Naive thymus-derived CD4-positive, alpha-beta T cell (primary cell): ENCODE measurements at regions of chr4 and their contacts with region 1.

Region 1: DNA sequence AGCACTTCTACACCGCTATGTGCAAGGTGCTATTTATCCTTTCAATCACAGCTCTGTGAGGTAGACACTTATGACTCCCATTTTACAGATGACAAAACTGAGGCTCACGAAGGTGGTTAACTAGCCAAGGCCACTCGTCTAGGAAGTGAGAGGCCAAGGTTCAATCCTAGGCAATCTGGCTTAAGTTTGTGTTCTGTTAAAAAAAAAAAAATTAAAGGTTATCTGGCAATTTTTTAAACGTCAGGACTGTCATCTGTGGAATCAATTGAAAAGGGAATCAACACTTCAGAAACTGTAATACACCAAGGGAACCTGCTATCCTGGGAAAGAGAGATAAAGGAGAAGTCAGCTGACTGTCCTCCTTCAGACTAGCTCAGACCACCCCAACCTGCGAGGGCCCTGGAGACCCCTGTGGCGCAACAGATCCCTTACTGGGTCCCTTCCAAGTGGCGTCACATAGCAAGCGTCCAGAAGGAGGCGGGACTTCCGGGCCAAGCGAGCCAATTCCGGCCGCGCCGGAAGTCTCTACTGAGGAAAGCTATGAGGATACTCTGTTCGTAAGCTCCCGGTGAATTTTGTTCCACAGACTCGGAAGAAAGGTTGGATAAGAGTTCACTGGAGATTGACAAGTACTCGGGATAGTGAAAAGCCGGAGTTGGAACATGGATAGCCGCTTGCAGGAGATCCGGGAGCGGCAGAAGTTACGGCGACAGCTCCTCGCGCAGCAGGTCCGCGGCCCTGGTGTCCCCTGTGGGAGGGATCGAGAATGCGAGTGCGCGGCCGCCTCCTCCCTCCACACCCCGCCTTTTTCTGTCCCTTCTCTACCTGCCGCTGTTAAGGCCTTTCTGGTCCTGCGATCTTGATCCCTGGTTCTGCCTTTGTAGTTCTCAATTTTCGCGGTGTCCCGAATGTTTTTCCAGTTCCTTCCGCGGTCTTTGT is at the start of gene METTL14:
- DNase-seq: peak; percentile 71 to 86 (median 82)
- ATAC-seq: peak; percentile 96
- H3K4me3 ChIP-seq: peak within 1 kb of the TSS; percentile 84
- H3K4me3 Mint-ChIP-seq: peak within 1 kb of the TSS; percentile 91 to 99 (median 97)
- H3K27ac ChIP-seq: peak within 1 kb of the TSS; percentile 83
- H3K27ac Mint-ChIP-seq: peak within 1 kb of the TSS; percentile 84 to 99 (median 96)
- H3K4me1 ChIP-seq: peaks cover 13 to 14% of the 10 kb centered on the region in 2 donors
- H3K4me1 Mint-ChIP-seq: peaks cover 12 to 41% (median 33%) of the 10 kb centered on the region in 7 donors
- H3K27me3 ChIP-seq: no peaks in the 10 kb centered on the region
- H3K27me3 Mint-ChIP-seq: no peaks in the 10 kb centered on the region
- total RNA-seq, gene METTL14: 46.9 to 64.8 (median 48.7) TPM

Region 2: DNA sequence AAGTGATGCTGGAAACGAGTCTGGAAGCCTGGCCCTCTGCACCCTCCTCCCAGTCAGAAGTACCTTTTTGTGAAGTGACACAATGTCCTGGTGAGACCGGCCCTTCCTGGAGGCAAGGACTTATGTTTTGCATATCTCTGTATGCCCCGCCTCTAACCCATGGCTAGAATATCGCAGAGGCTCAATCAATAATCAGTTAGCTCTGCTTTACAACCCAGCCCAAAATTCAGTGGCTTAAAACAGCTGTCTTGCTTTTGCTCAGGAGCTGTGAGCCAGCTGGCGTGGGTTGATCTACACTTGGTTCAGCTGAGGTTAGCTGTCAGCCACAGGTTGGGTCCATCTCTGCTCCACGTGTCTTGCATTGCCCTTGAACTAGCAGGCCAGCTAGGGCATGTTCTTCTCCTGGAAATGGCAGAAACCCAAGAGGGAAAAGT is 98.8 kb before region 1 on chr4:
- CTCF ChIA-PET with region 1: no interaction called
- POLR2A ChIA-PET with region 1: no interaction called
- intact Hi-C with region 1: loop called (anchors 1 kb)
- DNase-seq: no peak
- ATAC-seq: no peak
- H3K4me3 ChIP-seq: no peak overlapping the region
- H3K4me3 Mint-ChIP-seq: no peak overlapping the region
- H3K27ac ChIP-seq: no peak overlapping the region
- H3K27ac Mint-ChIP-seq: no peak overlapping the region
- H3K4me1 ChIP-seq: peaks cover 4 to 6% of the 10 kb centered on the region in 2 donors
- H3K4me1 Mint-ChIP-seq: peaks cover 6 to 19% (median 17%) of the 10 kb centered on the region in 7 donors
- H3K27me3 ChIP-seq: no peaks in the 10 kb centered on the region
- H3K27me3 Mint-ChIP-seq: peaks cover 2 to 37% (median 16%) of the 10 kb centered on the region in 5 donors

Region 3: GRCh38 chr4:118729287-118730286 is 44.4 kb after region 1 on chr4:
- CTCF ChIA-PET with region 1: no interaction called
- POLR2A ChIA-PET with region 1: interaction called, 5 read pairs
- intact Hi-C with region 1: loop called in 1 of 2 experiments (anchors 5 kb)
- DNase-seq: peak in 5 of 9 donors; percentile 8 to 52 (median 44)
- ATAC-seq: peak; percentile 74
- H3K4me3 ChIP-seq: no peak overlapping the region
- H3K4me3 Mint-ChIP-seq: peak overlapping the region in 7 of 10 donors; percentile 14 to 69 (median 54)
- H3K27ac ChIP-seq: no peak overlapping the region
- H3K27ac Mint-ChIP-seq: peak overlapping the region; percentile 11 to 89 (median 66)
- H3K4me1 ChIP-seq: peaks cover 0 to 13% of the 10 kb centered on the region in 2 donors
- H3K4me1 Mint-ChIP-seq: peaks cover 0 to 26% (median 17%) of the 10 kb centered on the region in 7 donors
- H3K27me3 ChIP-seq: no peaks in the 10 kb centered on the region
- H3K27me3 Mint-ChIP-seq: no peaks in the 10 kb centered on the region

Region 4: DNA sequence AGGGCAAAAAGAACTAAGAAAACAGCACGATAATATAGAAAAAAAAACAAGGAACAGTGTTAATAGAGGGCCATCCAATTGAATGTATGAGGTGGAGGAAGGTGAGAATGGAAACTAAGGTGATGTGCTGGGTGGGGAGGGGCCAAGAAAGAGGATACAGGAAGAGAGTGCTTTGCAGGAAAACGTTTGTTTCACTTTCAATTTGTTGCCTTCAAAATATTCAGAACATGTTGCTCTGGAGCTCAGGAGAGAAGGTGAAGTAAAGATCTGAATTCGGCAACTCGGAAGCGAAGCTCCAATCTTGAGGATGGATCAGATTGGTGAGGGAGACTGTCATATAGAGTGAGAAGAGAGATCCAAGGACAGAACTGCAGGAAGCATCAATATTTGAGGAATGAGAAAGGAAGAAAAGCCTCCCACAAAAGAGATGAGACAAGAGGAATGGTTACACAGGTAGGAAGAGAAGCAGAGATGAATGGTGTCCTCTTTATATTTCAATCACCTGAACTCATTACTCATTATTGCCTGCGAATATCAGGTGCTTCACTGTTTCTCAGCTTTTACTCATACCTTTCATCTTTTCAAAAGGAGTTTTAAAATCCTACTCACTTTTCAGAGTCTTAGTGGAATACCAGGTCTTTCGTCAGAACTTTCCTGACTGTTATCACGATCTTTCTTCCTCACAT is 165.5 kb after region 1 on chr4:
- CTCF ChIA-PET with region 1: no interaction called
- POLR2A ChIA-PET with region 1: no interaction called
- intact Hi-C with region 1: loop called in 1 of 2 experiments (anchors 5 kb)
- DNase-seq: peak in 7 of 9 donors; percentile 49 to 65 (median 59)
- ATAC-seq: peak; percentile 93
- H3K4me3 ChIP-seq: peak overlapping the region; percentile 78
- H3K4me3 Mint-ChIP-seq: peak overlapping the region; percentile 86 to 99 (median 93)
- H3K27ac ChIP-seq: peak overlapping the region; percentile 73
- H3K27ac Mint-ChIP-seq: peak overlapping the region; percentile 92 to 99 (median 96)
- H3K4me1 ChIP-seq: peaks cover 0 to 9% of the 10 kb centered on the region in 2 donors
- H3K4me1 Mint-ChIP-seq: peaks cover 14 to 37% (median 28%) of the 10 kb centered on the region in 7 donors
- H3K27me3 ChIP-seq: no peaks in the 10 kb centered on the region
- H3K27me3 Mint-ChIP-seq: peaks cover 0 to 20% (median 3%) of the 10 kb centered on the region in 5 donors

Region 5: DNA sequence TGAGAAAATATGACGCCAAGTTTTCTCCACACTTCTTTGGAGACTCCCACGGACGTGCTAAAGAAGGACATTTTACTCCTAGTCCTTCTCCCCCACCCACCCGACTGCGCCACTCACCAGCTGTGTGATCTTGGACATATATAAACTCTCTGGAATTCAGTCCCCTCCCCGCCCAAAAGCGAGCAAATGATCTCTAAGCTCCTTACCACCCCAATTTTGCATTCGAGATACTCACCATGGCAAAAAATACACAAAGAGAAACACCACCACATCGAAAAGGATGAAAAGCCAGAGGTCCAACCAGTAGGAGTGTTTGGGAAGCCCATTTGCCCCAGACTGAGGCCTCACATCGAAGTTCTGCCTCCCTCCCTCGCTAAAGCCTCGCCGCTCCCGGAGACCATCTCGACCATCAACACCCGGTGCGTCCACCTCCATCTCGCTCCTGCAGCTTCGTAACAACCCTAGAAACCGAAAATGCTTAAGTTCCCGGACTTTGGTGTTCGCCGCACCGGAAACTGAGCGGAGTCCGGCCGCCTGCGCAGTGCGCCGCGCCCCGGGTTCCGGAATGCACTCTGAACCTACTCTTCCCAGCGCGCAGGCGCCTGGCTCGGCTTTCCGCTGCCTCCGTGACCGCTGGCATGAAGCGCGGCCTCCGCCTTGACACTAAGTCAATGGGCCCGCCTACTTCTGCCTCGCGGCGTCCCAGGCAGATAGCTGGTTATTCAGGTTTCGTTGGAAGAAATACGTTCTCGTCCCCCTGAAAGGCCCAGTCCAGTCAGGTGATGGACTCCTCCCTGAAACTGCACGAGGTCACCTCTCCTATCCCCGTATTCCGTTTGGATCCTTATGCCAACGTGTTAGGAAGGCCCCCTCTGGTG is 615.2 kb after region 1 on chr4:
- CTCF ChIA-PET with region 1: no interaction called
- POLR2A ChIA-PET with region 1: no interaction called
- intact Hi-C with region 1: loop called (anchors 1 kb)
- DNase-seq: peak; percentile 84 to 94 (median 88)
- ATAC-seq: peak; percentile 97
- H3K4me3 ChIP-seq: peak overlapping the region; percentile 93
- H3K4me3 Mint-ChIP-seq: peak overlapping the region; percentile 92 to 100 (median 96)
- H3K27ac ChIP-seq: peak overlapping the region; percentile 90
- H3K27ac Mint-ChIP-seq: peak overlapping the region; percentile 98 to 100 (median 100)
- H3K4me1 ChIP-seq: peaks cover 5 to 22% of the 10 kb centered on the region in 2 donors
- H3K4me1 Mint-ChIP-seq: peaks cover 16 to 49% (median 43%) of the 10 kb centered on the region in 7 donors
- H3K27me3 ChIP-seq: no peaks in the 10 kb centered on the region
- H3K27me3 Mint-ChIP-seq: peaks cover 0 to 5% (median 0%) of the 10 kb centered on the region in 5 donors